Mammary epithelial cell (primary cell): ENCODE measurements at regions of chr9 and their contacts with region 1.

Region 1: GRCh38 chr9:122464633-122465567 is 12.8 kb downstream of the OR1J1 start:
- DNase-seq: peak; percentile 80
- H3K4me3 ChIP-seq: peak overlapping the region; percentile 47 to 72 (median 60)
- H3K27ac ChIP-seq: no peak overlapping the region
- H3K4me1 ChIP-seq: peaks cover 5% of the 10 kb centered on the region
- H3K27me3 ChIP-seq: no peaks in the 10 kb centered on the region
- CTCF ChIP-seq: peak; percentile 73 to 82

Region 2: DNA sequence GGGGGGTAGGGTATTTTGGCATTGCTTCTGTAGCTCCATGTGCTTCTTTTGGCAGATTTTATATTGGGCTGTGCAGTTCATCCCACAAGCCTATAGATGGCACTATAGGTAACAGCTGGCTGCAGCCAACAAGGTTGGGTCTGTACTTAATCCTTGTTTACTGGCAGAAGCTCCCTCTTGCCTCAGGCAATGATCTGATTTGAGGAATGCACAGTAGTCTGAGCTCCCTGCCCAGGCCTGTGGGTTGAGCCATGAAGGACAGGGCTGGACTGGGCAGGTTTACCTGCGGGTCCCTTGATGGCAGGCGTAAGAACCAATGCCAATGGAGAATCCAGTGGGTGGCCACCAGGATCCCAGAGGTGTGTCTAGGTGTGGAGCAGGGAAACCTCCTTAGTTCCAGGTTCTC is 34.0 kb after region 1 on chr9:
- CTCF ChIA-PET with region 1: interaction called, 5 read pairs
- dilution Hi-C with region 1: no loop called
- in situ Hi-C with region 1: no loop called
- intact Hi-C with region 1: loop called (anchors 1 kb)
- DNase-seq: peak; percentile 86
- H3K4me3 ChIP-seq: no peak overlapping the region
- H3K27ac ChIP-seq: no peak overlapping the region
- H3K4me1 ChIP-seq: peaks cover 9% of the 10 kb centered on the region
- H3K27me3 ChIP-seq: no peaks in the 10 kb centered on the region
- CTCF ChIP-seq: peak; percentile 89 to 96

Region 3: GRCh38 chr9:122800066-122801060 is 335.5 kb after region 1 on chr9 and contains the start of gene OR1K1:
- CTCF ChIA-PET with region 1: interaction called, 3 read pairs
- dilution Hi-C with region 1: loop called (anchors 5 kb)
- in situ Hi-C with region 1: no loop called
- intact Hi-C with region 1: no loop called
- DNase-seq: no peak
- H3K4me3 ChIP-seq: no peak within 1 kb of the TSS
- H3K27ac ChIP-seq: no peak within 1 kb of the TSS
- H3K4me1 ChIP-seq: no peaks in the 10 kb centered on the region
- H3K27me3 ChIP-seq: no peaks in the 10 kb centered on the region
- CTCF ChIP-seq: no peak
- total RNA-seq, gene OR1K1: not detected

Region 4: GRCh38 chr9:123081824-123082223 is 616.9 kb after region 1 on chr9:
- CTCF ChIA-PET with region 1: no interaction called
- dilution Hi-C with region 1: no loop called
- in situ Hi-C with region 1: no loop called
- intact Hi-C with region 1: loop called (anchors 10 kb)
- DNase-seq: peak; percentile 23
- H3K4me3 ChIP-seq: no peak overlapping the region
- H3K27ac ChIP-seq: no peak overlapping the region
- H3K4me1 ChIP-seq: peaks cover 3% of the 10 kb centered on the region
- H3K27me3 ChIP-seq: no peaks in the 10 kb centered on the region
- CTCF ChIP-seq: peak; percentile 52 to 61